Activated B cell treated with CpG ODN at 0.5 μM for 24 hours (primary cell): ENCODE measurements at regions of chr11 and their contacts with region 1.

Region 1: DNA sequence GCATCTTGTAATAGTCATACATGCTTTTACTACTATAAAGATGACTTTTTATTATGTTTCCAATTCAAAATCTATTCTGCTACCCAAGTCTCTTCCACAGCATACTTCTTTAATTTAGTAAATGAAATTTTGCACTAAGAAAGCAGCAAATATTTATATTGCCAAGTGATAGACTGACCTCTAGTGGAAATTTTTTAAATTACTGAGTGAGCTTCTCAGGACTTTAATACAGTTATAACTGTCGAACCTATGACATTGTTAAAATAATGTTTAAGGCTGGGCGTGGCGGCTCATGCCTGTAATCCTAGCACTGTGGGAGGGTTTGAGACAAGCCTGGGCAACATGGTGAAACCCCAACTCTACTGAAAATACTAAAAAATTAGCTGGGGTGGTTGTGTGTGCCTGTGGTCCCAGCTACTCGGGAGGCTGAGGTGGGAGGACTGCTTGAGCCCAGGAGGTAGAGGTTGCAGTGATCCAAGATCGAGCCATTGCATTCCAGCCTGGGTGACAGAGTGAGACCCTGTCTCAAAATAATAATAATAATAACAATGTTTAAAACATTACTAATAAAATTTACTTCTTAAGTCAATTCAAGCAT is 27.3 kb downstream of the STK33 start:
- DNase-seq: no peak
- ATAC-seq: peak; percentile 45
- H3K4me3 Mint-ChIP-seq: no peak overlapping the region
- H3K27ac Mint-ChIP-seq: no peak overlapping the region
- H3K4me1 Mint-ChIP-seq: no peaks in the 10 kb centered on the region
- H3K27me3 Mint-ChIP-seq: peaks cover 1% of the 10 kb centered on the region
- CTCF ChIP-seq: no peak

Region 2: DNA sequence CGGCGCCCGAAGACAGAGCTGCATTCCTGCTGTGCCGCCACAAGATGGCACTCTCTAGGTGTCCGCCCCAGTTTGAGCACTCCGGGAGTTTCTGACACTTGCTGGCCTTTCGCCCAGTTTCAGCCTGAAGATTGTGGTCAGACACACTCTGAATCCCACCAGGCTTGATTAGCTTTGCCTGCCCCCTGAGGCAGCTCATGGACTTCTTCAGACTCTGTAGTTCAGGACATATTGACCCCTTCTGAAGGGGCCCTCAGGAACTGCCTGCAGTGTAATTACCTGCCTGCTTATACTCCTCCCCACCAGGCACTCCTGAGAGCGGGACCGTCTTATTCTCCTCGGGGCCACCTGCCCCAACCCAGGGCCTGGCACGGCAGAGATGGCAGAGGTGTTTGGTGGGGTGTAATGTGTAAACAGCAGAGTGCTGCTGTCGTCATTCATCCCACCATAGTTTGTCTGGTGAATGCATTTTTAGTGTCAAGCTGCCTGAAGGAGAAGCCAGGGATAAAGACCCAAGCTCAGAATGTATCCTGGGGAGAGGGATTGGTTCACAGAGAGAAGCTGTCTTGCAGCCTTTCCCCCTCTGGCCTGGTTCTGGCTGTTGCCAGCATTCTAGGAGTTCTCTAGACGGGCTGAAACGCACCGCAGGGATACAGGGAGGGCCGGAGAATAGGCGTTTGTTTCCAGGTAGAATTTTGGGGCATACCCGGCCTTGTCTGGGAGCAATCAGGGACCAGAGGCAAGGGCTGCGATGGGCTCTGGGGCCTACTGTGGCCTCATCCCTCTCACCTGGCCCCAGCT is 533.2 kb before region 1 on chr11:
- CTCF ChIA-PET with region 1: interaction called, 9 read pairs
- POLR2A ChIA-PET with region 1: no interaction called
- intact Hi-C with region 1: loop called (anchors 1 kb)
- DNase-seq: peak; percentile 36
- ATAC-seq: peak; percentile 75
- H3K4me3 Mint-ChIP-seq: no peak overlapping the region
- H3K27ac Mint-ChIP-seq: no peak overlapping the region
- H3K4me1 Mint-ChIP-seq: peaks cover 6% of the 10 kb centered on the region
- H3K27me3 Mint-ChIP-seq: peaks cover 29% of the 10 kb centered on the region
- CTCF ChIP-seq: peak; percentile 44

Region 3: GRCh38 chr11:8219257-8220021 is 347.3 kb before region 1 on chr11:
- CTCF ChIA-PET with region 1: interaction called, 14 read pairs
- POLR2A ChIA-PET with region 1: no interaction called
- intact Hi-C with region 1: no loop called
- DNase-seq: no peak
- ATAC-seq: peak; percentile 42
- H3K4me3 Mint-ChIP-seq: no peak overlapping the region
- H3K27ac Mint-ChIP-seq: no peak overlapping the region
- H3K4me1 Mint-ChIP-seq: no peaks in the 10 kb centered on the region
- H3K27me3 Mint-ChIP-seq: peaks cover 3% of the 10 kb centered on the region
- CTCF ChIP-seq: no peak

Region 4: DNA sequence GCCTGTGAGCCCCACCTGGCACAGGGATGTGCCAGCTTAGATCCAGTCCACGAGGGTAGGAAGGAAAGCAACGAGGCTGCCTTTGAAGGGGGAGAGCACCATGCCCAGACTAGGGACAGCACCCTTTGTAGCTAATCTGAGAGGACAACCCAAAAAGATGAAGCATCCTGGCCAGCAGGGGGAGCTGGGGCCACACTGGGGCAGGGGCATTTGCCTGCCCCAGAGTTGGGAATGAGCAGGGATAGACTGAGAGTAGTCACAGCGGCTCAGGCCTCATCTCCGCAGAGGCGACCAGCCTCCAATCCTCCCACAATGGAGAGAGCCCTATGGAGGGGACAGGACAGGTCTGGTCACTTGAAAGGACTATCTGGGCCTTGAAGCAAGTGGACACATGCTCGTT is 319.4 kb before region 1 on chr11:
- CTCF ChIA-PET with region 1: interaction called, 37 read pairs
- POLR2A ChIA-PET with region 1: no interaction called
- intact Hi-C with region 1: loop called (anchors 1 kb)
- DNase-seq: no peak
- ATAC-seq: peak; percentile 21
- H3K4me3 Mint-ChIP-seq: no peak overlapping the region
- H3K27ac Mint-ChIP-seq: no peak overlapping the region
- H3K4me1 Mint-ChIP-seq: no peaks in the 10 kb centered on the region
- H3K27me3 Mint-ChIP-seq: peaks cover 17% of the 10 kb centered on the region
- CTCF ChIP-seq: no peak

Region 5: DNA sequence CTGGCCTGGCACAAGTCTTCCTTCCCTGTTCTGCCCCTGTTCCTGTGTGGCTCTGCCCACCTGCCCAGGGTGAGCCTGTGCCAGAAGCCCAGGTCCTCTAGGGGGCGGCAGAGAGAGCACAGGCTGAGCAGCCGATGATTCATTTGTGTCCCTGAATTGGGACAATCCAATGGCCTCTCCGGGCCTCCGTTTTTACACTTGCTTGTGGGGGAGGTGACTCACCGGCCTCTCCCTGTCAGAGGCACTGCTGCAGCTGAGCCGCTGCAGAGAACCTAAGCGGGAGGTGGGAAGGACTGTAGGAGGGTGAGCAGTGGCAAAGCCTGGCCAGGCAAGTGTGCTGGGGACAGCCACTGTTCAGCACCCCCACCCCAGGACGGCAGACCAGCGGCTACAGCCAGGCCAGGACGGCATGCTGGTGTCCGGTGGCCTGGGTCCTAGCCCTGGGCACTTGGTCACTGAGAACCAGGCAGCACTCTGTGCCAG is 237.8 kb before region 1 on chr11:
- CTCF ChIA-PET with region 1: interaction called, 5 read pairs
- POLR2A ChIA-PET with region 1: no interaction called
- intact Hi-C with region 1: loop called (anchors 2 kb)
- DNase-seq: peak; percentile 59
- ATAC-seq: peak; percentile 74
- H3K4me3 Mint-ChIP-seq: peak overlapping the region; percentile 46
- H3K27ac Mint-ChIP-seq: no peak overlapping the region
- H3K4me1 Mint-ChIP-seq: peaks cover 27% of the 10 kb centered on the region
- H3K27me3 Mint-ChIP-seq: peaks cover 8% of the 10 kb centered on the region
- CTCF ChIP-seq: no peak

Region 6: DNA sequence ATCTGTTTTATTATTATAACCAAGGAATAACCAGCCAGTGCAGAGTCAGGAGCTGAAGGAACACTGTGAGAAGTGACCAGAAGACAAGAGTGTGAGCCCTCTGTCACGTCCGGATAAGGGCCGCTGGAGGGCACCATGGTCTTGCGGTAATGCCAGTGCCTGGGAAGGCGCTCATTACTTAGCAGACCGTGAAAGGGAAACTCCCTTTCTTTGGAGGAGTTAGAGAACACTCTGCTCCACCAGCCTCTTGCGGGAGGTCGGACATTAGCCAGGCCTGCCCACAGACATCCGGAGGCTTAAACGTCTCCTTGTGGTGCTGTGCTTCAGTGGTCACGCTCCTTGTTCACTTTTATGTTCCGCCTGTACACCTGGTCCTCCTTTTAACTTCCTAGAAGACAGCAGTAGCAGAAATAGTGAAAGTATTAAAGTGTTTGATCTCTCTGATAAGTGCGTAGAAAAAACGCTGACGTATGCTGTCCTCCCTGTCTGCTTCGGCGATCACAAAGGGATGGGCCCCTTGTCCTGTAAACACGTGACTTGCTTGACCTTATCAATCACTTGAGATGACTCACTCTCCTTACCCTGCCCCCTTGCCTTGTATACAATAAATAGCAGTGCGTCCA is 182.4 kb before region 1 on chr11:
- CTCF ChIA-PET with region 1: interaction called, 5 read pairs
- POLR2A ChIA-PET with region 1: no interaction called
- intact Hi-C with region 1: loop called (anchors 1 kb)
- DNase-seq: no peak
- ATAC-seq: peak; percentile 73
- H3K4me3 Mint-ChIP-seq: peak overlapping the region; percentile 46
- H3K27ac Mint-ChIP-seq: peak overlapping the region; percentile 57
- H3K4me1 Mint-ChIP-seq: peaks cover 13% of the 10 kb centered on the region
- H3K27me3 Mint-ChIP-seq: no peaks in the 10 kb centered on the region
- CTCF ChIP-seq: no peak

Region 7: DNA sequence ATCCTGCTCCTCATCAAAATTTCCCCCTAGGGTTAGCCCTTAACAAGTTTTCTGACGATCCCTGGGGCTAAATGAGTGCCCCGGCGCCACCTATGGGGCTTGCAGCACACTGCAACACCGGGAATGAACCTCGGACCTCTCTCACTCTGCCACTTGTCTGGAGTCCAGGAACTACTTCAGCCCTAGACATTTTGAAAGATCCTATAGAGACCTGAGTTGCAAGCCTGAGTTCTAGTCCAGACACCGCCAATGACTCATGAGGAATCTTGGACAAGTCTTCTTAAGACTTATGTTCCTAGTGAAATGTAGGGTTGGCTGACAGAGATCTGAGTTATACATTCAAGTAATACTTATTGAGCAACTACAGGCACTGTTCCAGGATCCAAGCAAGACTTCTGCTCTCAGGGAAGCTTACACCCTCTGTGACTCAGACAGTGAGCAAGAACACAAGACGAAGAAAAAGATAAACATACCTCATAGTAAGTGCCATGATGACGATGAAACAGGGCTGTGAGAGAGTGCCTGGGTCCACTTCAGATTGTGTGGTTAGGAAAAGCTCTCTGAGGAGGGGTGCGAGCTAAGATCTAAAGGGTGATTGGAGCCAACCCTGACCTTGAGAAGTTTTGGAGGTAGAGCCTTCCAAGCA is 37.5 kb after region 1 on chr11:
- CTCF ChIA-PET with region 1: no interaction called
- POLR2A ChIA-PET with region 1: no interaction called
- intact Hi-C with region 1: no loop called
- DNase-seq: peak; percentile 25
- ATAC-seq: peak; percentile 76
- H3K4me3 Mint-ChIP-seq: no peak overlapping the region
- H3K27ac Mint-ChIP-seq: no peak overlapping the region
- H3K4me1 Mint-ChIP-seq: no peaks in the 10 kb centered on the region
- H3K27me3 Mint-ChIP-seq: peaks cover 24% of the 10 kb centered on the region
- CTCF ChIP-seq: peak; percentile 59